Mucosa of descending colon (tissue), 3 donors: ENCODE measurements at regions of chr18 and their contacts with region 1.

Region 1: GRCh38 chr18:60549338-60549960 is 176.9 kb upstream of the MC4R start:
- DNase-seq: peak in 1 of 3 donors; percentile 49
- ATAC-seq: no peak
- H3K4me3 ChIP-seq: no peak overlapping the region
- H3K4me1 ChIP-seq: no peaks in the 10 kb centered on the region
- CTCF ChIP-seq: peak; percentile 48

Region 2: DNA sequence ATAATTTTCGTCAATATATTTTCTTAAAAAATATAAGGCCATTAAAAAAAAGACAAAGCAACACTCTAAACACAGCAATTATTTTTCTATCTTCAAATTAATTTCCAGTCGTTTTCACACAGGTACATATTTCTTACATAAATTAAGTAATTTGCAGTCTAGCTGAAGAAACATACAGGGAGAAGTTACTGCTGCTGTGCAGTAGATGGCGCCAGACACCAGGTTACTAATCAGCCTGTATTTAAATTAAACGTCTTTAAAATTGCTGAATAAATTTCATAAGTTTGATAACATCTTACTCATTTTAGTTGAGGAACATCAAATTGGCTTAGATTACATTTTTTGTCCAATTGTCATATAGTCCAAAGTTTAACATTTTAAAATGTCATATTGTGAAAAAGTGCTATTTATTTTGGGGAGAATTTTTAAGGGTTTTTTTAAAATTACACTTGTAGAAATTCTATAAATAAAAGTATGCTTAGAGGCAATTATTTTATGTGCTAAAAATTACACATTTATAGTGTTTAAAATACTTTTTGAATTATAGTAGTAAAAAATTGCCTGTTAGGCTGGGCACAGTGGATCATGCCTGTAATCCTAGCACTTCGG is 561.2 kb before region 1 on chr18:
- intact Hi-C with region 1: loop called (anchors 10 kb)
- DNase-seq: peak in 2 of 3 donors; percentile 24 to 27
- ATAC-seq: peak; percentile 53
- H3K4me3 ChIP-seq: no peak overlapping the region
- H3K4me1 ChIP-seq: no peaks in the 10 kb centered on the region
- CTCF ChIP-seq: peak; percentile 76

Region 3: GRCh38 chr18:59996370-59996966 is 553.0 kb before region 1 on chr18:
- intact Hi-C with region 1: loop called in 1 of 2 experiments (anchors 10 kb)
- DNase-seq: peak in 1 of 3 donors; percentile 61
- ATAC-seq: peak; percentile 40
- H3K4me3 ChIP-seq: no peak overlapping the region
- H3K4me1 ChIP-seq: no peaks in the 10 kb centered on the region
- CTCF ChIP-seq: no peak